ENCODE measurements at regions of chr12 and their contacts with region 1.

Region 1: DNA sequence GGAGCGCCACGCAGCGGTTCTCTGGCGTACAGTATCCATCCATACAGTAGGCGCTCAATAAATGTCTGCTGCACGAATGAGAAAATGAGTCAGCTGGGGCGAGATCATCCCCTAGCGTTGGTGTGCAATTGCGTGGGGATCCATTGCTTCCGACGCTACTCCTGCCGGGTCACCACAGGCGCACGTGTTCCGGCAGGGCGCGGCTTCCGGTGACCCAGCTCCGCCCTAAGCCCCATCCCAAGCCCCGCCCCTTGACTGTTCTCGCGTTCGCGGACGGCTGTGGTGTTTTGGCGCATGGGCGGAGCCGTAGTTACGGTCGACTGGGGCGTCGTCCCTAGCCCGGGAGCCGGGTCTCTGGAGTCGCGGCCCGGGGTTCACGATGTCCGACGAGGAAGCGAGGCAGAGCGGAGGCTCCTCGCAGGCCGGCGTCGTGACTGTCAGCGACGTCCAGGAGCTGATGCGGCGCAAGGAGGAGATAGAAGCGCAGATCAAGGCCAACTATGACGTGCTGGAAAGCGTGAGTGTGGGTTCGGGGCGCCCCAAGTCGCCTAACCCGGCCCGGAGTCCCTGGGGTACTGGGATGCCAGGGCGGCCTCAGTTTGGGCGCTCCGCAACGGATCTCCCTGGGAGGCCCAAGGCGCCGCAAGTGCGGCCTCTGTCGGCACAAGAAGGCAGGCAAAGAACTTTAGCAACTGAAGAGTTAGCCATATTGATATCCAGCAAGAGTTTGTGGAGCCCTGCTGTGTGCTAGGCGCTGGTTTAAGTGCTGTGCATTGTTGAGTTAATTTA is at the start of gene PSMD9:
- DNase-seq: peak; percentile 96 to 99 (median 98)
- ATAC-seq: peak; percentile 90
- H3K4me3 ChIP-seq: peak within 1 kb of the TSS; percentile 96
- H3K4me3 Mint-ChIP-seq: peak within 1 kb of the TSS; percentile 96
- H3K27ac ChIP-seq: peak within 1 kb of the TSS; percentile 86 to 97
- H3K27ac Mint-ChIP-seq: peak within 1 kb of the TSS; percentile 96
- H3K4me1 ChIP-seq: peaks cover 39% of the 10 kb centered on the region
- H3K4me1 Mint-ChIP-seq: peaks cover 32% of the 10 kb centered on the region
- H3K27me3 ChIP-seq: no peaks in the 10 kb centered on the region
- H3K27me3 Mint-ChIP-seq: no peaks in the 10 kb centered on the region
- CTCF ChIP-seq: peak; percentile 21
- total RNA-seq, gene PSMD9: 29.5 to 31.8 TPM

Region 2: GRCh38 chr12:121351820-121352681 is 536.6 kb before region 1 on chr12 and contains the start of gene ANAPC5:
- CTCF ChIA-PET with region 1: no interaction called
- POLR2A ChIA-PET with region 1: no interaction called
- intact Hi-C with region 1: loop called in 1 of 2 experiments (anchors 5 kb)
- DNase-seq: peak; percentile 80 to 97 (median 86)
- ATAC-seq: peak; percentile 97
- H3K4me3 ChIP-seq: peak within 1 kb of the TSS; percentile 67
- H3K4me3 Mint-ChIP-seq: peak within 1 kb of the TSS; percentile 95
- H3K27ac ChIP-seq: peak within 1 kb of the TSS; percentile 54 to 59
- H3K27ac Mint-ChIP-seq: peak within 1 kb of the TSS; percentile 87
- H3K4me1 ChIP-seq: peaks cover 32% of the 10 kb centered on the region
- H3K4me1 Mint-ChIP-seq: peaks cover 36% of the 10 kb centered on the region
- H3K27me3 ChIP-seq: no peaks in the 10 kb centered on the region
- H3K27me3 Mint-ChIP-seq: peaks cover 4% of the 10 kb centered on the region
- CTCF ChIP-seq: peak; percentile 20
- total RNA-seq, gene ANAPC5: 88.2 to 96.2 TPM

Region 3: GRCh38 chr12:121417847-121418246 is 470.8 kb before region 1 on chr12:
- CTCF ChIA-PET with region 1: no interaction called
- POLR2A ChIA-PET with region 1: no interaction called
- intact Hi-C with region 1: no loop called
- DNase-seq: no peak
- ATAC-seq: no peak
- H3K4me3 ChIP-seq: no peak overlapping the region
- H3K4me3 Mint-ChIP-seq: no peak overlapping the region
- H3K27ac ChIP-seq: no peak overlapping the region
- H3K27ac Mint-ChIP-seq: peak overlapping the region; percentile 74
- H3K4me1 ChIP-seq: no peaks in the 10 kb centered on the region
- H3K4me1 Mint-ChIP-seq: peaks cover 31% of the 10 kb centered on the region
- H3K27me3 ChIP-seq: no peaks in the 10 kb centered on the region
- H3K27me3 Mint-ChIP-seq: no peaks in the 10 kb centered on the region
- CTCF ChIP-seq: no peak

Region 4: DNA sequence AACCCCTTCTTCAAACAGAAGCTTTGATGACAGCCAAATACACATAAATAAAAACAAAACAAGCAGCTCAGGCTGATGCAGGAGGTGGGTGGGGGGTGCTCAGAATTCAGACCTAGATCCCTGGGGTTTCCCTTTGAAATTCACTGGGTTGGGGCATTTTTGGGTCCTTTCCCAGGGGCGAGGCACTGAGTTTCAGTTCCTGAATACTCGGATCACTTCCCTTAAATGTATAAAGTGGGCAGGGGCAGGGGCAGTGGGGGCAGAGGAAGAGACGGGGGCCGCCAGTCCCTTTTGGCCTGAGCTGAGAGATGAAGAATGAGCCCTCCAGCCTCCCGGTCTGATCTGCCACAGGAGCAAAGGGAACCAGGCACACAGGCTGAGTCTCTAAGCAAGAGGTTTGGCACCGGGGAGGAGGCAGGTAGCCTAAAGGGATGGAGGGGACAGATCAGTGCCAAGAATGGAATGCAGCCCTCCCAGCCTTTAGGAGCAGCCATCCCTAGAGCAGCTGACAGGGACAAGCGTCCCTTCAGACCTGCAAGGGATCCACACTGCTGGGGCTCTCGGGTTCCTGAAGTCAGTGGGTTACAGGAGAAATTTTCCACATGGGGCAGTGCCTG is 328.2 kb before region 1 on chr12:
- CTCF ChIA-PET with region 1: no interaction called
- POLR2A ChIA-PET with region 1: no interaction called
- intact Hi-C with region 1: no loop called
- DNase-seq: peak in 2 of 14 experiments; percentile 63 to 67
- ATAC-seq: no peak
- H3K4me3 ChIP-seq: no peak overlapping the region
- H3K4me3 Mint-ChIP-seq: no peak overlapping the region
- H3K27ac ChIP-seq: no peak overlapping the region
- H3K27ac Mint-ChIP-seq: no peak overlapping the region
- H3K4me1 ChIP-seq: peaks cover 9% of the 10 kb centered on the region
- H3K4me1 Mint-ChIP-seq: no peaks in the 10 kb centered on the region
- H3K27me3 ChIP-seq: no peaks in the 10 kb centered on the region
- H3K27me3 Mint-ChIP-seq: no peaks in the 10 kb centered on the region
- CTCF ChIP-seq: no peak

Region 5: GRCh38 chr12:121712461-121713256 is 176.0 kb before region 1 on chr12 and contains the start of gene TMEM120B:
- CTCF ChIA-PET with region 1: interaction called, 6 read pairs
- POLR2A ChIA-PET with region 1: interaction called, 5 read pairs
- intact Hi-C with region 1: loop called (anchors 2 to 5 kb)
- DNase-seq: peak; percentile 71 to 93 (median 82)
- ATAC-seq: peak; percentile 87
- H3K4me3 ChIP-seq: peak within 1 kb of the TSS; percentile 99
- H3K4me3 Mint-ChIP-seq: peak within 1 kb of the TSS; percentile 90
- H3K27ac ChIP-seq: peak within 1 kb of the TSS; percentile 40 to 54
- H3K27ac Mint-ChIP-seq: peak within 1 kb of the TSS; percentile 83
- H3K4me1 ChIP-seq: peaks cover 27% of the 10 kb centered on the region
- H3K4me1 Mint-ChIP-seq: peaks cover 19% of the 10 kb centered on the region
- H3K27me3 ChIP-seq: no peaks in the 10 kb centered on the region
- H3K27me3 Mint-ChIP-seq: no peaks in the 10 kb centered on the region
- CTCF ChIP-seq: peak; percentile 26
- total RNA-seq, gene TMEM120B: 7.3 to 7.7 TPM

Region 6: DNA sequence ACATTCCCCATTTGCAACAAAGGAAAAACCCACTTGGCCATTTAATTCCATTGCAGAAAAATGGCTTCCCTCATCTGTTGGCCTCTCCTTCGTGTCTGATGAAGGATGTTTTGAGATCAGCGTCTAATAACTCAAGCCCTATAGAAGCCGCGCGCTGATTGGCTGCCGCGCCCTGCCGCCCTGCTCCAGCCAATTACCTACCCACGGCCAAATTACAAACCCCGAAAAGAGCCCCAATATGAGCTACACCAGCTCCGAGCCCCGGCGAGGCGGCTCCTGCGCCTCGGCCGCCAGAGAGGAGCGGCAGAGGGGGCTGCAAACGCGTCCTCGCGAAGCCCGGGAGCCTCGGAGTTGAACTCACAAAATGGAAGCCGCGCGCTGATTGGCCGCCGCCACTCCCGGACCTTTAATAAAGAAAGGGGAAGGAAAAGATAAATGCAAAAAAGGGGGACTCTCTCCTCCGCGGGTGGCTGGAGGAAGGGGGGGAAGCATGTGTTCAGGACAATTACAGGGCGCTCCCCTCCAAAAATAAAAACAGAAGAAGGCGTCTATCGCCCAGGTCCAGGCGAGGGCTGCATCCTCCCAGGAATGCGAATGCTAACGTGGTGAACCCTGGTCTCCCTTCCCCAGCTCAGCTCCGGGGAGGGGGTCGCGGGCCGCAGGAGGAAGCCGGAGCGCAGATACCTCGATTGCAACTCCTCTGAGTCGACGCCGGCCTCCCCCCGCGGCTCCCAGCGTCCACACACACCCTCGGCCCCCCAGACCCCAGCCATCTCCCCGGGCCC is 85.6 kb before region 1 on chr12:
- CTCF ChIA-PET with region 1: interaction called, 8 read pairs
- POLR2A ChIA-PET with region 1: interaction called, 62 read pairs
- intact Hi-C with region 1: no loop called
- DNase-seq: peak; percentile 78 to 96 (median 85)
- ATAC-seq: peak; percentile 47
- H3K4me3 ChIP-seq: peak overlapping the region; percentile 100
- H3K4me3 Mint-ChIP-seq: peak overlapping the region; percentile 99
- H3K27ac ChIP-seq: peak overlapping the region; percentile 96 to 97
- H3K27ac Mint-ChIP-seq: peak overlapping the region; percentile 98
- H3K4me1 ChIP-seq: peaks cover 50% of the 10 kb centered on the region
- H3K4me1 Mint-ChIP-seq: peaks cover 44% of the 10 kb centered on the region
- H3K27me3 ChIP-seq: no peaks in the 10 kb centered on the region
- H3K27me3 Mint-ChIP-seq: no peaks in the 10 kb centered on the region
- CTCF ChIP-seq: no peak

Region 7: GRCh38 chr12:121839106-121839992 is 49.3 kb before region 1 on chr12:
- CTCF ChIA-PET with region 1: interaction called, 4 read pairs
- POLR2A ChIA-PET with region 1: interaction called, 4 read pairs
- intact Hi-C with region 1: loop called (anchors 1 to 5 kb)
- DNase-seq: peak; percentile 99 to 100 (median 100)
- ATAC-seq: peak; percentile 97
- H3K4me3 ChIP-seq: peak overlapping the region; percentile 85
- H3K4me3 Mint-ChIP-seq: peak overlapping the region; percentile 94
- H3K27ac ChIP-seq: peak overlapping the region; percentile 21 to 44
- H3K27ac Mint-ChIP-seq: peak overlapping the region; percentile 77
- H3K4me1 ChIP-seq: peaks cover 18% of the 10 kb centered on the region
- H3K4me1 Mint-ChIP-seq: peaks cover 14% of the 10 kb centered on the region
- H3K27me3 ChIP-seq: no peaks in the 10 kb centered on the region
- H3K27me3 Mint-ChIP-seq: no peaks in the 10 kb centered on the region
- CTCF ChIP-seq: peak; percentile 54